ENCODE measurements at regions of chr6 and their contacts with region 1.

Region 1: GRCh38 chr6:33344701-33345697 is 27.5 kb upstream of the ZBTB22 start:
- DNase-seq: peak; percentile 35 to 73
- ATAC-seq: peak; percentile 47 to 67; a peak in 4 of 6 replicates
- H3K4me3 ChIP-seq: no peak overlapping the region
- H3K27ac ChIP-seq: no peak overlapping the region
- H3K4me1 ChIP-seq: no peaks in the 10 kb centered on the region
- CTCF ChIP-seq: peak; percentile 40
- EP300 ChIP-seq: no peak
- POLR2A ChIP-seq: no peak
- RAD21 ChIP-seq: peak; percentile 32 to 38; a peak in 2 of 5 replicates

Region 2: GRCh38 chr6:33324125-33324524 is 20.9 kb before region 1 on chr6:
- CTCF ChIA-PET with region 1: interaction called, 11 read pairs
- POLR2A ChIA-PET with region 1: no interaction called
- DNase-seq: no peak
- ATAC-seq: no peak
- H3K4me3 ChIP-seq: peak overlapping the region; percentile 51; the same call in 2 of the 3 replicates
- H3K27ac ChIP-seq: peak overlapping the region; percentile 70 to 97; a peak in 5 of 6 replicates
- H3K4me1 ChIP-seq: peaks cover 23% of the 10 kb centered on the region
- CTCF ChIP-seq: no peak
- EP300 ChIP-seq: no peak
- POLR2A ChIP-seq: no peak
- RAD21 ChIP-seq: no peak

Region 3: DNA sequence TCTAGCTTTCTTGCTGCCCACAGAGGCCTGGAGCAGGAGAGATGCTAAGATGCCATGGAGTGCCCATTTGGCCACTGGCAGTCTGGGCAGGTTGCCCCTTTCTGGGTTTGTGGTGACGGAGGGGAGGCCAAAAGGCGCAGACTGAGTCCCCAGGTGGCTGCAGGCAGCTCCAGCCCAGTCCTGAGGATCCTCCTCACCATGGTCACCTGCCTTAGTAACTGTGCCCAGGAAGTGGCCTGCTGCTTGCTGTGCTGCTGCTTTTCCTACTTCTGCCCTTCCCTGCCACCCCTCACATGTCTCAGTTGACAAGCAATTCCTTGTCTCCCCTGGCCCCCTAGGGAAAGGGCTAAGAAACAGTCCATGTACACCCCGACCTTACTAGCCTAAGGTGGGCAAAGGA is 11.3 kb after region 1 on chr6:
- CTCF ChIA-PET with region 1: interaction called, 14 read pairs
- POLR2A ChIA-PET with region 1: no interaction called
- DNase-seq: no peak
- ATAC-seq: no peak
- H3K4me3 ChIP-seq: no peak overlapping the region
- H3K27ac ChIP-seq: 0 out of 6 replicates have a peak overlapping the region, but pooled peaks of 1 of the 2 experiments have one; percentile 17
- H3K4me1 ChIP-seq: peaks cover 6% of the 10 kb centered on the region; the same call in 2 of the 3 replicates
- CTCF ChIP-seq: no peak
- EP300 ChIP-seq: no peak
- POLR2A ChIP-seq: no peak
- RAD21 ChIP-seq: no peak

Measured in A549 (cell line).